ENCODE measurements at regions of chr18 and their contacts with region 1.

Region 1: DNA sequence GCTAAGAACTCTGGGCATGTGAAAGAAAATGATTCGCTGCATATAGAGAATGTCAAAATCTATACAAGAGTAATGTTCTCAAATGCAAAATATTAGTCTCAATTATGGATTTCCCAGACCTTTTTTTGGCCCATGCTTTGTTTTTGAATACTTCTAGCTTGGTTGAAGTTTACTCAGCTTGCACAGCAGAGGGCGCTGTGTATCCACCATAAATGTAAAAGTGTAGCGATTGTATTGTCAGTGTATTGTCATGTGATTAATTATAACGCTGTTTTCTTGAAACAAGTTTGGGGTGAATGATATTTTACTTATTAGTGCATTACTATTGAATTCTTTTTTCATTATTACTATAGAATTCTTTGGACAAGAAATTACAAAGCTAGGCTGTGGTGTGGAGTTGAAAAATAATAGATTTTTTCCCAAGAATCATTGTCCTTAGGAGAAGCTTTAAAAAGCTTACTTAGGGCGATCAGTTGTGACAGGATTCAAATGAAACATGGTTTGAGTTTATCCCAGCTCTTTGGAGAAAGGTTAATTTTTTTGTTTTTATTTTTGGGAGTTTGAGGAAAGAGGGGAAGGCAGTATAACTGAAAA is 98.3 kb downstream of the PIK3C3 start:
- DNase-seq: peak; percentile 56 to 79
- H3K4me3 ChIP-seq: no peak overlapping the region
- H3K4me1 ChIP-seq: no peaks in the 10 kb centered on the region
- H3K27me3 ChIP-seq: no peaks in the 10 kb centered on the region

Region 2: GRCh38 chr18:42157420-42157819 is 104.1 kb after region 1 on chr18:
- in situ Hi-C with region 1: no loop called
- DNase-seq: no peak
- H3K4me3 ChIP-seq: no peak overlapping the region
- H3K4me1 ChIP-seq: no peaks in the 10 kb centered on the region
- H3K27me3 ChIP-seq: no peaks in the 10 kb centered on the region

Region 3: DNA sequence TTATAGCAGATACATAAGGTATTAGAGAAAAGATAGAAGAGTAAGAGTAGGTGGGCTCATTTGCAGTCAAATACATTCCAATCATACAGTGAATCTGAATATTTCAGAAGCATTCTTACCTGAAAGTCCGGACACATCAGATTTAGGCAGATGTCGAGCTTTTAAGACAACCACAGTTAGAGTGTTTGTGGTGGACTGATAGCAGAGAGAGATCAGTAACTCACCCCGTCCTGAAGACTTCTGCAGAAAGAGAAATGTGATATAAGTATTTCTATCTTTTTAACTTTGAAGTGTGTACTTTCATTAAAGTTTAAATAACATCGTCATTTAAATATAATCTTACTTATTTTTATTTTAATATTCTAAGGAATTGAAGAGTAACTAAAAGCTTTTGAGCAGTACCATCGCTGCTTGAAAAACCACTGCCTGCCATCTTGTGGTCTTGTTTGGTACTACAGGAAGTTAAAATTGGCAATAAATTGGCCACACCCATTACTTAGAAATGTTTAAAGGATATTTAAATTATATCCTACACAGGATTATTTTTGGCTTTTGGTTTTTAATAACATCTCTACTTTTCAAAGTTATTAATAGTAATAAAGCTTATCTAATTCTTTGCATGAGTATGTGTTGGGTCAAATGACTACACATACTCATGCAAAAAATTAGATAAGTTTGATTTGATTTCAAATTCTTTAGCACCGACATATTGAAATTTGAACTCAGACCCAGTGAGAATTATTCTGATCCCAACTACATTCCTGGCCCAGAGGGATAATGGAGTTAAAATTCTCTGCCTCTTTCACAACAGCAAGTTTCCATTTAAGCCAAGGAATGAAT is 1218.5 kb after region 1 on chr18:
- in situ Hi-C with region 1: loop called (anchors 10 kb)
- DNase-seq: peak; percentile 52 to 57
- H3K4me3 ChIP-seq: no peak overlapping the region
- H3K4me1 ChIP-seq: peaks cover 5% of the 10 kb centered on the region
- H3K27me3 ChIP-seq: no peaks in the 10 kb centered on the region

Region 4: GRCh38 chr18:43571078-43571689 is 1517.9 kb after region 1 on chr18:
- in situ Hi-C with region 1: loop called (anchors 25 kb)
- DNase-seq: peak; percentile 37 to 58
- H3K4me3 ChIP-seq: no peak overlapping the region
- H3K4me1 ChIP-seq: no peaks in the 10 kb centered on the region
- H3K27me3 ChIP-seq: no peaks in the 10 kb centered on the region